Lower leg skin (tissue), 4 donors: ENCODE measurements at regions of chr10 and their contacts with region 1.

Region 1: GRCh38 chr10:99435986-99436638 is 5.7 kb upstream of the GOT1 start:
- DNase-seq: no peak
- H3K4me3 ChIP-seq: no peak overlapping the region
- CTCF ChIP-seq: no peak
- POLR2A ChIP-seq: no peak

Region 2: DNA sequence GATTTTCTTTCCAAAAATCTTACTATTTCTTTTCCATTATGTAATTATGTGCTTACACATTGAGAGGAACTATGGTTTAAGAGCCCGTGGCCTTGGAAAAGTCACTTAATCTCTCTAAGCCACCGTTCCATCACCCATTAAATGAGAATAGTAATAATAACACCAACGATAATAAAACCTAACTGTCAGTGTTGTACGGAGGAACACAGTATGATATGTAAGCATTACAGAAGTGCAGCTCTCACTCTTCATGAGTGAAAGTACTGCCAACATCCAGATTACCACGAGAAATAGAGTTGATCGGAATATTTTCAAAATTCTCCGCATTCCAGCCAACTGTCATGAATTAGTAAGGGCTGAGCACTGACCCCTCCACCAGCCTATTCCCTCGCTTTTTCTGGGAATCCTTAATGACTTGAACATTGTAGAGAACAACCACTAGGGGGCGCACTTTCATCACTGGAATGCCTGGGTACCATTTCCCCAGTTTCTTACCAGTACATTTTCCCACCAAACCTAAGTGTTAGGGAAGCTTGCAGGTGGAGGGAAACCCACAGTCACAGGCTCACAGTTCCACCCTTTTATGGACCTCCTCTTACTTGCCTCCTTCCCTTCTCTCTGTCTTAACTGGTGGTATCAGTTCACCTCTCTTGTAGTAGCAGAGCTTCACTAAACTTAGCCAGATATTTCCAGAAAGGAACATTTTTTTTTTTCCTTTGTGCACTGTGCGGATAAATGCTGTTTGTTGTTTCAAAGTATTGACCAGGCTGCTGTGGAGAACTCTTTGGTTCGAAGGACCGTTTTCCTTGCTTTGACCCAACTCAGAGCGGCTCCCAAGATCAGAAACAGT is 124.4 kb after region 1 on chr10:
- intact Hi-C with region 1: loop called (anchors 5 kb)
- DNase-seq: no peak
- H3K4me3 ChIP-seq: no peak overlapping the region
- CTCF ChIP-seq: no peak
- POLR2A ChIP-seq: no peak